ENCODE measurements at regions of chr13 and their contacts with region 1.

Region 1: DNA sequence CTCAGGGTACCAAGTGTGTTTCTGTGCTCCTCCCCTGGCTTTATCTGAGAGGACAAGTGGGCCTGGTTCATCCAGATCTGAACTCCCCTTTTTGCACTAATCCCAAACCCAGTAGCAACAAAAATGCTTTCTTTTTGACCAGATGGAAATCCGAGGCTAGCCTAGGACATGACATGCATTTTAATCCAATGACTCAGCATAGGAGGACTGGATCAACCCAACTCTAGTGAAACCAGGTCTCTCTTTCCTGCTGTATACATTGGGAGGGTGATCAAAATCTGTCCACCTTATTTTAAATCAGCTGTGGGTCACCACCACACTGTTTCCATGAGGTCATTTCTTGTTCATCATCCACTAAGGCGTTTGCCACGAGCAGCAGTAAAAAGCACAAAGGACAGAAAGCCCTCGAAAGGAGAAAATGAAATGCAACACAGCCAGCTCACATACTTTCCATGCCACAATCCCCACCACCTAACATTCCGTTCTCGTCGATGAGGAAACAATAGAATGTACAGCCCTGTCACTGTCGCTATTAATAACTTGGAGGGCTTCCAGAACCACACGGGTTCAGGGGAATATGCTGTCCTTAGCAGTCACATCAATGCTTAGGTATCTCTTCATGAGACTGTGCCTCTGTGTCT is 543.0 kb downstream of the IRS2 start:
- DNase-seq: no peak
- H3K4me3 ChIP-seq: peak overlapping the region in 1 of 2 donors; percentile 17
- H3K27ac ChIP-seq: peak overlapping the region; percentile 61 to 66
- H3K4me1 ChIP-seq: peaks cover 0 to 18% (median 11%) of the 10 kb centered on the region in 4 donors
- H3K27me3 ChIP-seq: no peaks in the 10 kb centered on the region
- CTCF ChIP-seq: no peak

Region 2: GRCh38 chr13:109162248-109163053 is 81.0 kb before region 1 on chr13:
- intact Hi-C with region 1: loop called (anchors 10 kb)
- DNase-seq: no peak
- H3K4me3 ChIP-seq: no peak overlapping the region
- H3K27ac ChIP-seq: no peak overlapping the region
- H3K4me1 ChIP-seq: peaks cover 0 to 16% (median 0%) of the 10 kb centered on the region in 4 donors
- H3K27me3 ChIP-seq: no peaks in the 10 kb centered on the region
- CTCF ChIP-seq: no peak